ENCODE measurements at regions of chr6 and their contacts with region 1.

Region 1: GRCh38 chr6:1604158-1605030 is 5.3 kb upstream of the FOXC1 start:
- DNase-seq: peak; percentile 80
- ATAC-seq: peak; percentile 76
- H3K4me3 Mint-ChIP-seq: no peak overlapping the region
- H3K27ac Mint-ChIP-seq: no peak overlapping the region
- H3K4me1 Mint-ChIP-seq: peaks cover 34% of the 10 kb centered on the region
- H3K27me3 Mint-ChIP-seq: peaks cover 73% of the 10 kb centered on the region
- CTCF ChIP-seq: no peak

Region 2: DNA sequence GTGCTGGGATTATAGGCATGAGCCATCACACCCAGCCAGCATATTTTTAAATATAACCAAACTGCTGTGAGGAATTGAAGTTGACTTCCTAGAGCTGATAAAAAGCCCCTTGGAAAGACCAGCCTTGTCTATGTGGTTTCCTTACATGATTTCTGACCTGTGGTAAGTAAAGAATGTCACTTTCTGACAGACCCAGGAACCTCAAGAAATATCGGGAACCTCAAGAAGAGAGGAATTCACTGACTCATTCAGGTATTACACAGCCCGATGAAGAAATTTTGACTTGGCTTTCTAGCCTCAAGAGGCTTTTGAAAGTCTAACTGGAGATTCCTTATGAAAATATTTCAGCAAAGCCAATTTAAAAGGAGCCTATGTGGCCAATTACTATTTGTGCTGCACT is 143.2 kb before region 1 on chr6:
- CTCF ChIA-PET with region 1: no interaction called
- POLR2A ChIA-PET with region 1: no interaction called
- intact Hi-C with region 1: no loop called
- DNase-seq: no peak
- ATAC-seq: no peak
- H3K4me3 Mint-ChIP-seq: no peak overlapping the region
- H3K27ac Mint-ChIP-seq: no peak overlapping the region
- H3K4me1 Mint-ChIP-seq: no peaks in the 10 kb centered on the region
- H3K27me3 Mint-ChIP-seq: peaks cover 11% of the 10 kb centered on the region
- CTCF ChIP-seq: no peak

Region 3: DNA sequence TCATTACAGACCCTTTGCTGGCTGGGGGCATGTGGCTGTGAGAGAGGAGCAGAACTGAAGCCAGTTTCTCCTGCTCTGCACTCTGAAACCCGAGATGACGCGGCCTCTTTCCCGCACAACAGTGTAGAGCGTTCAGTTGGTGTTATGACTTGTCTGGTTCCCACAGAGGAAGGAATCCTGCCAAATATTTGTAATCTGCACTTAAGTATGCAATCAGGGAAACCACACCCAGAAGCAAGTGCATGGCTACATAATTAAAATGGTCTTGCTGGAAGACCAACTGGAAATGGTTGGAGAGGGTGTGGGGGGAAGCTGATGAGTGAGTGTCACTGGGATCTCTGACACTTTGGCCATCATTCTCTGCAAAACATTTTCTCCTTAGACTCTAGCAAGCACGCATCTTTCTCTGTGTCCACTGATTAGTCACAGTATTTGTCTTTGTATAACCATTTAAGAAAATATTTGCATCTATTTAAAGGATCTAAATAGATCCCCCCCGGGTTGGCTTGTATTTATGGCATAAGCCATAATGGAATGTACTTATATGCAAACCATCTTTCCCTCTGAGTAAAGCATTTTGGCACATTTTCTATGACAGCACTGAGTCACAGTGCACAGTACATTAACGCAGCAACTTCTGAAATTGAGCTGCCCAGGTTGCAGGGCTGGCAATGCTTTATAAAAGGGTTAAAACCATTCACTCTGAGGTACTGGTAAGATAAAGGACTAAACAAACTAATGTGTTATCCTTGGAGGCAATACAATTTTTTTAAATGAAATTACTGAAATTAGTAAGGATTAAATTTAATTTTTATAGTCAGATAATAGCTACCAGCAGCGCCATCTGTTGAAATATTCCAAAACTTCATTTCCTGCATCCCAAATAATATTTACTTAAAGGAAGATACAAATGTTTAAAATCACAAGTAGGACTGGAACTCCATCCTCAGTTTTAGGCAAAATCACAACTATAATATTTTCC is 82.0 kb after region 1 on chr6:
- CTCF ChIA-PET with region 1: interaction called, 4 read pairs
- POLR2A ChIA-PET with region 1: no interaction called
- intact Hi-C with region 1: loop called (anchors 1 kb)
- DNase-seq: no peak
- ATAC-seq: no peak
- H3K4me3 Mint-ChIP-seq: no peak overlapping the region
- H3K27ac Mint-ChIP-seq: no peak overlapping the region
- H3K4me1 Mint-ChIP-seq: no peaks in the 10 kb centered on the region
- H3K27me3 Mint-ChIP-seq: no peaks in the 10 kb centered on the region
- CTCF ChIP-seq: no peak

Region 4: DNA sequence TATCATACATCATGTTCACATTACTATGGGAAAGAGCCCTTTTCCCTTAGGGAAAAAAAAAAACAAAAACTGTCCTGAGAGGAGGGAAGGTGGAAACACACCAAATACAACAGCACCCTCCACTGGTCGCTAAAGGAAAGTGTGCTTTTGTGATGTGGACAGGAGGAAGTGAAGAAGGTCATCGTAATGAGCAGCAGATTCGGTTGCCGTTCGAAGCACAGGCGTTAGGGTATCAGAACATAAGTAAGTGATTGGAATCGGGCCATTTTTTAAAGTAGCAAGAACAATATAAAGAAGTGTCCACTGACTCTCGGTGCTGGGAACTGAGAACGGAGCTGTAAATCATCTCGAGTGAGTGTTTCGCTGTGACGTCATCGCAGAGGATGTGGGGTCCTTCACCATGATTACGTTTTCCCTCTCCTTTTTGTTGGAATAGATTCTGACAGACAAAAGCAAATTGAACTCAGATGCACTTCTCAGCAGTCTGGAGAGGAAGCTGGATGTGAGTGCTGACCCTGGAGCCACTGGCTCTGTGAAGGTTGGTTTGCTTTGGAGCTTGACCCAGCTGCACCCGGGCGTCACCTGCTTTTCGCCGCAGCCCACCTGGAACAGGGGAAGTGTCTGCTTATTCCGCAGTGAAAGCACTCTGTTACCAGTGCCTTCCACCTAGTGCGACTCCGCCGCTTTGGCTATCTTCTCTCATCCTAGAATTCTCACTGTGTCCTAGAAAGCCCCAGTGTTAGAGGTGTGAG is 844.6 kb after region 1 on chr6:
- CTCF ChIA-PET with region 1: no interaction called
- POLR2A ChIA-PET with region 1: no interaction called
- intact Hi-C with region 1: loop called (anchors 1 kb)
- DNase-seq: no peak
- ATAC-seq: no peak
- H3K4me3 Mint-ChIP-seq: peak overlapping the region; percentile 67
- H3K27ac Mint-ChIP-seq: no peak overlapping the region
- H3K4me1 Mint-ChIP-seq: peaks cover 8% of the 10 kb centered on the region
- H3K27me3 Mint-ChIP-seq: no peaks in the 10 kb centered on the region
- CTCF ChIP-seq: no peak